GM12878 (cell line): ENCODE measurements at regions of chr2 and their contacts with region 1.

Region 1: GRCh38 chr2:68196120-68196716 is 38.5 kb downstream of the PNO1 start:
- DNase-seq: no peak
- ATAC-seq: peak; percentile 40; the same call in 2 of the 3 replicates
- H3K4me3 ChIP-seq: no peak overlapping the region
- H3K27ac ChIP-seq: no peak overlapping the region
- H3K4me1 ChIP-seq: peaks cover 3% of the 10 kb centered on the region; the same call in 1 of the 2 replicates
- H3K27me3 ChIP-seq: no peaks in the 10 kb centered on the region
- CTCF ChIP-seq: peak; percentile 33 to 39 (median 37); a peak in 5 of 6 replicates
- EP300 ChIP-seq: no peak
- POLR2A ChIP-seq: no peak
- RAD21 ChIP-seq: peak; percentile 61

Region 2: DNA sequence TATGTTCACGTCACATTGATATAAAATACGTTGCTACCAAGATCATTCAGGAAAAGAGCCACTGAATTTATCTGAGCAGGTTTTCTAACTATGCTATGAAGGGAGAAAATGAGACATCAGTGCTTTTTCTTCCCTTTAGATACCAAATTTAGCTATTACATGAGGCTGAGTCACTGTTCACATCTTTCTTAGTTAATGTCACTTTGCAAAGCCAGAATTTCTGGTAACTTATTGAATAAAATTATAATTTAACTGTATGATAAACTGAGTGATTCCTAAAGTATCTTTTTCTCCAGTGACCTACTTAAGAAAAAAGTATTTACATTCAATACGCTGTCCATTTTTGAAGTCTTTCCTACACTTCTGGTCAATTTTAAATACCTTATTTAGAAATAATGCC is 156.1 kb before region 1 on chr2:
- CTCF ChIA-PET with region 1: no interaction called
- POLR2A ChIA-PET with region 1: no interaction called
- RAD21 ChIA-PET with region 1: no interaction called
- SMC1A ChIA-PET with region 1: no interaction called
- in situ Hi-C with region 1: no loop called
- intact Hi-C with region 1: no loop called
- DNase-seq: no peak
- ATAC-seq: no peak
- H3K4me3 ChIP-seq: no peak overlapping the region
- H3K27ac ChIP-seq: no peak overlapping the region
- H3K4me1 ChIP-seq: no peaks in the 10 kb centered on the region
- H3K27me3 ChIP-seq: no peaks in the 10 kb centered on the region
- CTCF ChIP-seq: no peak
- EP300 ChIP-seq: no peak
- POLR2A ChIP-seq: no peak
- RAD21 ChIP-seq: no peak

Region 3: DNA sequence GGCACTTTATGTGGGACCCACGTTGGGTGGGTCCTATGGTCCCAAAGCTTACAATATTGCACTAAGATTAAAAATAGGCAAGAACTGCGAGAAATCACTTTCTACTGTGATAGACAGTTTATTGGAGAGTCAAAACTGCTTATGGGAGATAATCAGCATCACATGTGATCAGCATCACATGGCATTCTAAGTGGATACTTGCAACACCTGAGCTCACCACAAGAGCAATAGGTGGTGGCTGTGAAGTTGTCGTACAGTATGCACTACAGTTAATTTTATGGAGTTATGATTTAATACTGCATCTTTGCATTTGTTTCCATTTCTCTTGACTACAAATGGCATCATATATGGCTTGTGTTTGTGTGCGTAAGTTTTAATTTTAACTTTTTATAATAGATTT is 26.9 kb before region 1 on chr2:
- CTCF ChIA-PET with region 1: interaction called, 10 read pairs
- POLR2A ChIA-PET with region 1: no interaction called
- RAD21 ChIA-PET with region 1: no interaction called
- SMC1A ChIA-PET with region 1: interaction called, 5 read pairs
- in situ Hi-C with region 1: no loop called
- intact Hi-C with region 1: no loop called
- DNase-seq: no peak
- ATAC-seq: peak; percentile 68
- H3K4me3 ChIP-seq: no peak overlapping the region
- H3K27ac ChIP-seq: no peak overlapping the region
- H3K4me1 ChIP-seq: no peaks in the 10 kb centered on the region
- H3K27me3 ChIP-seq: no peaks in the 10 kb centered on the region
- CTCF ChIP-seq: 0 out of 6 replicates have a peak, but pooled peaks of 1 of the 3 experiments have one; percentile 9
- EP300 ChIP-seq: no peak
- POLR2A ChIP-seq: no peak
- RAD21 ChIP-seq: no peak

Region 4: DNA sequence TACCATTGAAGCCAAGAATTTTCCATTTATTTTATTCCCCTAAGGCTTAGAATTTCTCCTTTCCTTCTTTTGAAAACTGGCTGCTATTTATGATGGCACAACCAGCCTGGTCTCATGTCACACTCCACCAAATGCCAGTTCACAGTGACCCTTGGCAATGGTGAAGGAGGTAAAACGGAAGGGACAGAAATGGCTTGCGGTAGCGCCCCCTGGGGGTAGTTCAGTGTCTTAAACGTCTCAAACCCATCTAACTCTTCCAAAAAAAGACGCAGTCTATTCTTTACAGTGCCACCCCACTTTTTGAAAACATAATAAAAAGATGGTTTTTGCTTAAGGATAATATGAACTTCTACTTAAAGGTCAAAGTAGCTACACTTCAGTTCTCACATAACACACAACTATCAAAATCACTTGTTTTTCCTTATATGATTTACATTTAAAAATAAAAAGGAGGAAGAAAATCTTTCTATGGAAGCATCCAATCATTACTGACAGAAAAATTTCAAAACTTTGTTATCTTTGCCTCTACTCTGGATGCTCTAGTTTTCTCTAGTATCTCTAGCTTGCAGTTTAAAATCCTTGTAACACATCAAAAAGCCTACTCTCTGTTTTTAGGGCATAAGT is 10.6 kb before region 1 on chr2:
- CTCF ChIA-PET with region 1: interaction called, 53 read pairs
- POLR2A ChIA-PET with region 1: no interaction called
- RAD21 ChIA-PET with region 1: interaction called, 4 read pairs
- SMC1A ChIA-PET with region 1: interaction called, 11 read pairs
- in situ Hi-C with region 1: no loop called
- intact Hi-C with region 1: no loop called
- DNase-seq: peak; percentile 28
- ATAC-seq: peak; percentile 94
- H3K4me3 ChIP-seq: no peak overlapping the region
- H3K27ac ChIP-seq: no peak overlapping the region; the same call in 1 of the 2 replicates
- H3K4me1 ChIP-seq: no peaks in the 10 kb centered on the region
- H3K27me3 ChIP-seq: no peaks in the 10 kb centered on the region
- CTCF ChIP-seq: peak; percentile 55 to 80 (median 80)
- EP300 ChIP-seq: no peak
- POLR2A ChIP-seq: no peak
- RAD21 ChIP-seq: peak; percentile 49

Region 5: DNA sequence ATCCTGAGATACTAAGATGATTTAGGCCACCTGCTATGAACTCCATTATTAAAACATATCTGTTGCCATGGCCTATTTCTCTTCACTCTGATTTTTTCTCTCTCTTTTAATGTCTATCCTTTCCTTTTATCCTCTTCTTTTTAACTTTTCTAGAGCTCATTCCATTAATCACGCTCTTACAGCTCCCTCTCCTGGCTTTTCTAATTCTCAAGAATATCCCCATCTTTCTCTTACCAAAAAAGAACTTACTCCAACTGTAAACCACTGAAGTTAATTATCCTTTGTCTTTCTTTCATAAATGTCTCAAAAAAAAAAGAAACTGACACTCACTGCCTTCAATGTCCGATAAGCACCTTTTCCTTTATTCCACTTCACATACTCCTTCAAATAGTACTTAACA is 48.2 kb after region 1 on chr2:
- CTCF ChIA-PET with region 1: interaction called, 35 read pairs
- POLR2A ChIA-PET with region 1: interaction called, 3 read pairs
- RAD21 ChIA-PET with region 1: interaction called, 7 read pairs
- SMC1A ChIA-PET with region 1: interaction called, 13 read pairs
- in situ Hi-C with region 1: no loop called
- intact Hi-C with region 1: no loop called
- DNase-seq: no peak
- ATAC-seq: no peak
- H3K4me3 ChIP-seq: no peak overlapping the region
- H3K27ac ChIP-seq: no peak overlapping the region
- H3K4me1 ChIP-seq: peaks cover 3% of the 10 kb centered on the region
- H3K27me3 ChIP-seq: no peaks in the 10 kb centered on the region
- CTCF ChIP-seq: no peak; a peak in 1 of 6 replicates
- EP300 ChIP-seq: no peak
- POLR2A ChIP-seq: no peak
- RAD21 ChIP-seq: peak; percentile 21; the same call in 1 of the 2 replicates

Region 6: GRCh38 chr2:68282811-68283418 is 86.7 kb after region 1 on chr2:
- CTCF ChIA-PET with region 1: interaction called, 103 read pairs
- POLR2A ChIA-PET with region 1: no interaction called
- RAD21 ChIA-PET with region 1: interaction called, 7 read pairs
- SMC1A ChIA-PET with region 1: interaction called, 19 read pairs
- in situ Hi-C with region 1: no loop called
- intact Hi-C with region 1: loop called (anchors 2 kb)
- DNase-seq: no peak
- ATAC-seq: peak; percentile 84
- H3K4me3 ChIP-seq: no peak overlapping the region
- H3K27ac ChIP-seq: no peak overlapping the region
- H3K4me1 ChIP-seq: no peaks in the 10 kb centered on the region
- H3K27me3 ChIP-seq: no peaks in the 10 kb centered on the region
- CTCF ChIP-seq: peak; percentile 69 to 77 (median 70); a peak in 5 of 6 replicates
- EP300 ChIP-seq: no peak
- POLR2A ChIP-seq: no peak
- RAD21 ChIP-seq: peak; percentile 84

Region 7: GRCh38 chr2:68362069-68362468 is 165.9 kb after region 1 on chr2:
- CTCF ChIA-PET with region 1: interaction called, 6 read pairs
- POLR2A ChIA-PET with region 1: no interaction called
- RAD21 ChIA-PET with region 1: interaction called, 9 read pairs
- SMC1A ChIA-PET with region 1: interaction called, 10 read pairs
- in situ Hi-C with region 1: no loop called
- intact Hi-C with region 1: no loop called
- DNase-seq: peak; percentile 78
- ATAC-seq: peak; percentile 54
- H3K4me3 ChIP-seq: peak overlapping the region; percentile 33; the same call in 1 of the 2 replicates
- H3K27ac ChIP-seq: peak overlapping the region; percentile 94
- H3K4me1 ChIP-seq: peaks cover 21% of the 10 kb centered on the region
- H3K27me3 ChIP-seq: no peaks in the 10 kb centered on the region
- CTCF ChIP-seq: peak; percentile 75 to 92 (median 81)
- EP300 ChIP-seq: peak; percentile 34 to 68; a peak in 1 of 4 replicates
- POLR2A ChIP-seq: peak; percentile 68
- RAD21 ChIP-seq: peak; percentile 97